Activated CD8-positive, alpha-beta memory T cell treated with anti-CD3 and anti-CD28 coated beads, Interleukin-2, amount 10 ng/mL, durations not matched to agents 7 days and 5 days (primary cell): ENCODE measurements at regions of chr3 and their contacts with region 1.

Region 1: DNA sequence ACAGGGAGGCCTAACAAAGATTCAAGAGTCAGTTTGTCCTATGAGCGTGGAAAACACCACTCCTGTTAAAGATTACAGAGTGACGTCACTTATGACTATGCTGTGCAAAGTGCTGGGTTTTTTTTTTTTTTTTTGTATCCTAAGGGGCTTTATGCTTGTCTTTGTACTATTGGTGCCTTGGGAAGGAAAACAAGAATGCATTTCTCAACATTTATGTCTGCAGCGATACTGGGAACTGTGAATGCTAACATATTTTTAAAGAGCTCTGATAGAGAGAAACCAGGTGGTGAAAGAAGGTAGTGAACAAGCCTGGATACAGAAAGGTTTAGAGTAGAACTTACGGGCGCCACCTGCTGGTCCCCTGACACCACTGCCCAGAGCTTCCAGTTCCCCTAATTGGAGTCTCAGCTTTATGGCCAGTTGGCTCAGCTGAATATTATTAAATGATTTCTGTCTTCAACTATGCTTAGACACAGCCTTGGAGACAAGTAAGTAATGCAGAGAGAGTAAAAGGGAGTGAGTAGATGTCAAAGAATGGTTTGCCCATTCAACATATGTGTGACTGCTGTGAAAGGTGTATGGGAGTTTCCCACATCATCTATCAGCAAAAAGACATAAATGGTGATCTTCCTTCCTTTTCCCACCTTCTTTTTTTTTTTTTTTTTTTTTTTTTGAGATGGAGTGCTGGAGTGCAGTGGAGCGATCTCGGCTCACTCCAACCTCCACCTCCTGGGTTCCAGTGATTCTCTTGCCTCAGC is 807.9 kb upstream of the CFAP20DC start:
- DNase-seq: peak; percentile 80
- ATAC-seq: peak; percentile 91
- H3K4me3 Mint-ChIP-seq: no peak overlapping the region
- H3K27ac Mint-ChIP-seq: no peak overlapping the region
- H3K4me1 Mint-ChIP-seq: no peaks in the 10 kb centered on the region
- H3K27me3 Mint-ChIP-seq: no peaks in the 10 kb centered on the region

Region 2: DNA sequence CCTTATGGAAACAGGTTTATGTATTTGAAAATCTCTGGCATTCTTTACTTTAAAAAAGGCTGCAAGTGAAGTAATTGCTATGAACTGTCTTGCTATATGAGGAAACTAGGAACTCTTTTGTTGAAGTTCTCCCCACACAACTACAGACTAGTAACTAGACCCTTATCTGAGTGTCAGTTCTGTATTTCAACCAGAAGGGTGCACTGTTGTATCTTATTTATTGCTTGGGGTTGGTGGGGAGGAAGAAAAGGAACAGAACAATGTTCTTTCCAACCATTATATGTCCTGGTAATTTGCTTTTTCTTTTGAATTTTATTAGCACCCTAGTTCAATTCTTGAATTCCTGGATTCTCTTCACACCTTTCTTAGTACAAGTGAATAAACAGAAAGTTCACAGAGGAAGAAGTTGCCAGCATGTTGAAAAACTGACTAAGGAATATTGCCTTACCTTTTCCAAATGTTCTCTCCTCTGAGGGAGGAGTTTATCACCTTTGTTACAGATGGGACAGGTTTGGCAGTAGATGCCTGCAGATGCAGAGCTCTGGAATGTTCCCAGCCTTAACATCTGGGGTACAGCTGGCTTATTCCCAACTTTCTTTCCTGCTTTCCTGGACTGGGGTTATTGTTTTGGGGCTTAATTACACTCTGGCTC is 645.5 kb before region 1 on chr3:
- CTCF ChIA-PET with region 1: interaction called, 12 read pairs
- DNase-seq: no peak
- ATAC-seq: peak; percentile 79
- H3K4me3 Mint-ChIP-seq: no peak overlapping the region
- H3K27ac Mint-ChIP-seq: no peak overlapping the region
- H3K4me1 Mint-ChIP-seq: no peaks in the 10 kb centered on the region
- H3K27me3 Mint-ChIP-seq: peaks cover 22% of the 10 kb centered on the region

Region 3: DNA sequence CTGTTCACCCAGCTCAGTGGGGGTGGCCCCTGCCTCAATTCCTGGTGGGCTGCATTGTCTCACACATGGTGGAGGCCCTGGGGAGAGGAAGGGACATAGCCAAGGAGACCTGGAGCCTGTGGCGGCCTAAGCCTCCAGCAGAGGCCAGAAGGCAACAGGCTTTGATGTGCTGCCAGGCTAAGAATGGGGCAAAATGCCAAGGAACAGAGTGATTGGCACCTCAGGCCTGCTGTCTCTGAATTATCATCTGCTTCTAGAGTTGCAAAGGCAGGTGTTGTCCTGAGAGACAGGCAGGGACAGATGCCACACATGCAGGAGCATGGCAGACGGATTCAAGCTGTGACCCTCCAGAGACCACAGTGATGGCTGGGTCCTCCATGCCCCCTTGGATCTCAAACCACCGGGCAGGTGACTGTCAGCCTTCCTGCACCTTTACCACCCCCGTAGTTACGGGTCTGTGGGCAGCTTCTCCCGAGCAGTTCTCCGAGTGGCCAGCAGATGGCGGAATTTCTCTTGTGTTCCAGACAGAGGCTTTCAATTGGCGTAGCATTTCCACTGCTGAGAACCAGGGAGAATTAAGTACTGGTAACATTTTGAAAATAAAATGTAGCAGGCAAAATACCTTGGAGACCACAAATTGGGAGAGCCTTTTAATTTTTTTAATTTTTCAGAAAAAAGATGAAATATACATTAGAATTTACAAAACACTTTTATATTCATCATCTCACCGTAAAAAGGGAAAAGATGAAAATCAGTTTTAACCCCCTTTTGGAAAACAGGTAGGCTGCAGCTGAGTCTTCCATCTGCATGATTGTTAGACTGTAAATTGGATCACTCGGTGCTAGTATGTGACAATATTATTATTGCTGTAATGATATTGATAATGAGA is 282.4 kb before region 1 on chr3:
- CTCF ChIA-PET with region 1: interaction called, 42 read pairs
- DNase-seq: peak; percentile 87
- ATAC-seq: peak; percentile 85
- H3K4me3 Mint-ChIP-seq: no peak overlapping the region
- H3K27ac Mint-ChIP-seq: no peak overlapping the region
- H3K4me1 Mint-ChIP-seq: peaks cover 3% of the 10 kb centered on the region
- H3K27me3 Mint-ChIP-seq: no peaks in the 10 kb centered on the region